ENCODE measurements at regions of chr5 and their contacts with region 1.

Region 1: GRCh38 chr5:90434116-90434714 is 24.7 kb upstream of the CETN3 start:
- DNase-seq: no peak
- H3K4me3 ChIP-seq: no peak overlapping the region
- H3K27ac ChIP-seq: no peak overlapping the region
- H3K4me1 ChIP-seq: peaks cover 6% of the 10 kb centered on the region
- H3K27me3 ChIP-seq: no peaks in the 10 kb centered on the region
- CTCF ChIP-seq: peak; percentile 67

Region 2: DNA sequence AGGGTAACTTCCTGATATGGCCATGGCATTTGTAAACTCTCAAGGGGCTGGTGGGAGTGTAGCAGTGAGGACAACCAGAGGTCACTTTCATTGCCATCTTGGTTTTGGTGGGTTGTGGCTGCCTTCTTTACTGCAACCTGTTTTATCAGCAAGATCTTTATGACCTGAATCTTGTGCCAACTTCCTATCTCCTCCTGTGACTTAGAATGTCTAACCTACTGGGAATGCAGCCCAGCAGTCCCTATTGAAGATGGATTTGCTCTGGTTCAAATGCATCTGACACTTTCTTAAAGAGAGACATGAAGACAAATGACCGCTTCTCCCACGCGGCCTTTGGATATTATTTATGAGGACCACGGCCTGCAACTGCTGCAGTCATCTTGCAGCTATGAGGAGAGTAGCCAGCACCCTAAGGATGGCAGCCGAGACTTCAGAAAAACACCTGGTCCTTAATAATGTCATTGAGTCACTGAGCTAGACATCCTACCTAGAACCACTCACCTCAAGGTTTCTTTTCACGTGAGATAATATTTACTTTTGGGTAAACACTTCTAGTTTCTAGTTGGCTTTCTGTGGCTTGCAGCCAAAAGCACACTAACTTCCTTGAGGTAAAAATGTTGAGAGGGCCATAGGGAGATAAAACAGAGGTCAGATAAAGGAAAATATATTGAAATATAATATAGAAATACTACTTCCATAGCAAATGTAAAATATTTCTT is 52.8 kb before region 1 on chr5:
- intact Hi-C with region 1: no loop called
- DNase-seq: no peak
- H3K4me3 ChIP-seq: no peak overlapping the region
- H3K27ac ChIP-seq: no peak overlapping the region
- H3K4me1 ChIP-seq: no peaks in the 10 kb centered on the region
- H3K27me3 ChIP-seq: peaks cover 2% of the 10 kb centered on the region
- CTCF ChIP-seq: no peak

Region 3: GRCh38 chr5:90529194-90529938 is 95.2 kb after region 1 on chr5 and contains the start of gene LYSMD3:
- intact Hi-C with region 1: loop called (anchors 10 kb)
- DNase-seq: peak; percentile 99
- H3K4me3 ChIP-seq: peak within 1 kb of the TSS; percentile 97
- H3K27ac ChIP-seq: peak within 1 kb of the TSS; percentile 95
- H3K4me1 ChIP-seq: peaks cover 50% of the 10 kb centered on the region
- H3K27me3 ChIP-seq: peaks cover 18% of the 10 kb centered on the region
- CTCF ChIP-seq: no peak
- total RNA-seq, gene LYSMD3: 19.8 TPM

Region 4: GRCh38 chr5:90621848-90622247 is 187.6 kb after region 1 on chr5:
- intact Hi-C with region 1: no loop called
- DNase-seq: no peak
- H3K4me3 ChIP-seq: no peak overlapping the region
- H3K27ac ChIP-seq: no peak overlapping the region
- H3K4me1 ChIP-seq: no peaks in the 10 kb centered on the region
- H3K27me3 ChIP-seq: peaks cover 6% of the 10 kb centered on the region
- CTCF ChIP-seq: no peak

Region 5: GRCh38 chr5:90783460-90784333 is 349.5 kb after region 1 on chr5:
- intact Hi-C with region 1: loop called (anchors 10 kb)
- DNase-seq: peak; percentile 40
- H3K4me3 ChIP-seq: no peak overlapping the region
- H3K27ac ChIP-seq: no peak overlapping the region
- H3K4me1 ChIP-seq: no peaks in the 10 kb centered on the region
- H3K27me3 ChIP-seq: no peaks in the 10 kb centered on the region
- CTCF ChIP-seq: peak; percentile 92